ENCODE measurements at regions of chr16 and their contacts with region 1.

Region 1: DNA sequence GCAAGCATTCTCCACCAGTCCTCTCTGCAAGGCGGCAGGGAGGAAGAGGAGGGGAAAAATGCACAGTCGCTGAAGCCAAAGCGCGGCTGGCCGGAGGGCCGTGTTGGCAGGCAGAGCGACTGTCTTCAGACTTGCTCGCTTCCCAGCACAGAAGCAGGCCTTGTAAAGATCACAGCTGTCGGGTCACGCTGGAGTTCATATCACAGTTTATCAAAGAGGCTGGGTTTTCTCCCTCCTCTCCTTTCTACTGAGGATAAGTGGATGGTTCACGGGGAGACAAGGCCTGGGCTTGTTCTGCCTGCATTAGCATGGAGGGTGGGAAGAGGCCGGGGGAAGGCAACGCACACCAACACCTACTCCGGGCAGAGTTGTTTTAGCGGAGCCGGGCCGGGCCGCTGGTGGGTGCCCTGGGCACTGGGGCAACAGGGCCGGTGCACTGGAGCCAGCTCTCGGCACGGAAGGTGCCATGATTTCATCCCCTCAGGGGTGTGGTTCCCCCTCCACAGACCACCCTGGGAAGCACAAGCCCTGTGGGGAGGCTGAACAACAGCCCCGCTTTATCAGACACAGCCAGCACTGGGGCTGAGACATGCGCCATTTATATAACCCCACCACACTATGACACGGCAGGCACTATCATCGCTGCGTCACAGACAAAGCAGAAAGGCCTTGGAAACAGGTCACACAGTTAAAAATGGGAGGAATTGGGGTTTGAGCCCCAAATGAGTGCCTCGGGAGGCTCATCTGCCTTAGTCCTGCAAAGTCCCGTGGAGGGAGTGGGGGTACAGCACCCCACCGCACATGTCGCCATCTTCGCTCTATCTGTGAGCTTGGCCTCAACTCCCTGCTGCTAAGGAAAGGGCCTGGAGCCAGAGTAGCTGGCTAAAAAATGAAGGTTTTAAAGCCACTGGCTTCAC is 40.3 kb upstream of the MTSS2 start:
- DNase-seq: no peak
- ATAC-seq: no peak
- H3K4me3 ChIP-seq: peak overlapping the region; percentile 27 to 73 (median 52); a peak in 5 of 6 replicates
- H3K27ac ChIP-seq: peak overlapping the region; percentile 99
- H3K4me1 ChIP-seq: peaks cover 45% of the 10 kb centered on the region
- H3K27me3 ChIP-seq: no peaks in the 10 kb centered on the region
- CTCF ChIP-seq: no peak
- EP300 ChIP-seq: no peak
- POLR2A ChIP-seq: 0 out of 4 replicates have a peak, but pooled peaks of 1 of the 2 experiments have one; percentile 5
- RAD21 ChIP-seq: no peak

Region 2: GRCh38 chr16:69839798-69840409 is 886.3 kb before region 1 on chr16:
- CTCF ChIA-PET with region 1: no interaction called
- POLR2A ChIA-PET with region 1: no interaction called
- in situ Hi-C with region 1: no loop called
- intact Hi-C with region 1: loop called (anchors 5 kb)
- DNase-seq: peak; percentile 81
- ATAC-seq: peak; percentile 81
- H3K4me3 ChIP-seq: peak overlapping the region in 2 of 3 experiments; percentile 2 to 9; a peak in 2 of 6 replicates
- H3K27ac ChIP-seq: peak overlapping the region; percentile 82
- H3K4me1 ChIP-seq: peaks cover 69% of the 10 kb centered on the region
- H3K27me3 ChIP-seq: no peaks in the 10 kb centered on the region
- CTCF ChIP-seq: no peak
- EP300 ChIP-seq: peak in 1 of 2 experiments; percentile 60; a peak in 2 of 4 replicates
- POLR2A ChIP-seq: no peak
- RAD21 ChIP-seq: no peak

Region 3: GRCh38 chr16:70490261-70490803 is 235.8 kb before region 1 on chr16:
- CTCF ChIA-PET with region 1: no interaction called
- POLR2A ChIA-PET with region 1: no interaction called
- in situ Hi-C with region 1: no loop called
- intact Hi-C with region 1: no loop called
- DNase-seq: no peak
- ATAC-seq: no peak
- H3K4me3 ChIP-seq: no peak overlapping the region
- H3K27ac ChIP-seq: no peak overlapping the region
- H3K4me1 ChIP-seq: no peaks in the 10 kb centered on the region
- H3K27me3 ChIP-seq: no peaks in the 10 kb centered on the region
- CTCF ChIP-seq: no peak
- EP300 ChIP-seq: no peak
- POLR2A ChIP-seq: no peak
- RAD21 ChIP-seq: no peak

Region 4: GRCh38 chr16:70615945-70616344 is 110.2 kb before region 1 on chr16:
- CTCF ChIA-PET with region 1: no interaction called
- POLR2A ChIA-PET with region 1: no interaction called
- in situ Hi-C with region 1: no loop called
- intact Hi-C with region 1: no loop called
- DNase-seq: no peak
- ATAC-seq: no peak
- H3K4me3 ChIP-seq: no peak overlapping the region
- H3K27ac ChIP-seq: no peak overlapping the region
- H3K4me1 ChIP-seq: peaks cover 2% of the 10 kb centered on the region; the same call in 1 of the 2 replicates
- H3K27me3 ChIP-seq: peaks cover 0 to 14% of the 10 kb centered on the region in 2 experiments; a peak in 2 of 5 replicates
- CTCF ChIP-seq: no peak
- EP300 ChIP-seq: no peak
- POLR2A ChIP-seq: no peak
- RAD21 ChIP-seq: no peak

Region 5: DNA sequence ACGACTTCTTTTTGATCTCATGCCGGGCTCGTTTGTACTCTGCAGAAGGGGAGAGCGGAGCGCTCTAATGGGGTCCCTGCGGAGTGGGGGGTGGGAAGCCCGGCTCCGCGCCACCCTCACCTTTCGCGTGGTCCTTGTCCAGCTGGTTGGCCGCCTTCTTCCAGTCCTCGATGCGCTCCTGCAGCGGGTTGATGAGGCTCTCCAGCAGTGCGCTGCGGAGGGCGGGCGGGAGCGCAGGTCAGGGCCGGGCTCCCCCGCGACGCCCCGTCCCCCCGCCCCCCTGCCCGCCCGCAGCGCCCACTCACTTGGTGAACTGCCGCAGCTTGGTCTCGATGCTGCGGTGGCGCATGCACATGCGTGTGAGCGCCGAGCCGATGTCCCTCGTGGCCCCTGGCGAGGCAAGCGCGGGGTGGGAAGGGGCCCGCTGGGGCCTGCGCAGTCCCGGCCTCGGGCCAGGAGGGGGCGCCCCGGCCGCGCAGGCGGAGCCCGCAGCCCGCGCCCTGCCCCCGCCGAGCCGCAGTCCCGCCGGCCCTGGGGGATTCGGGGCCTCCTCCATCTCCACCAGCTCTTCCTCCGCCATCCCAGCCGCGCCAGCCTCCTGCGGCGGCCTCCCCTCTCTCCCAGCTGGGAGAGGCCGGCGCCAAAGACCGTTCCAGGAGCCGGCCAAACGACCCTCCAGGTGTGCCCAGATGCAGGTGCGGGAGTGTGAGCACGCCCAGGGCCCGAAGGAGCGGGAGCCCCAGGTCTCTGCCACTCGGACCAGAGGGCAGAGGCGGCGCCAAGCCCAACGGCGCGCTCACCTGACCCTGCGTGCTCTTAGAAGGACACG is 46.3 kb before region 1 on chr16:
- CTCF ChIA-PET with region 1: no interaction called
- POLR2A ChIA-PET with region 1: interaction called, 536 read pairs
- in situ Hi-C with region 1: loop called (anchors 5 kb)
- intact Hi-C with region 1: loop called (anchors 1 kb)
- DNase-seq: no peak
- ATAC-seq: no peak
- H3K4me3 ChIP-seq: no peak overlapping the region; a peak in 1 of 6 replicates
- H3K27ac ChIP-seq: peak overlapping the region; percentile 91
- H3K4me1 ChIP-seq: peaks cover 39% of the 10 kb centered on the region
- H3K27me3 ChIP-seq: no peaks in the 10 kb centered on the region; a peak in 1 of 5 replicates
- CTCF ChIP-seq: peak; percentile 26; the same call in 1 of the 2 replicates
- EP300 ChIP-seq: no peak
- POLR2A ChIP-seq: no peak
- RAD21 ChIP-seq: peak; percentile 58; the same call in 1 of the 2 replicates

Region 6: GRCh38 chr16:70703041-70703834 is 22.9 kb before region 1 on chr16:
- CTCF ChIA-PET with region 1: no interaction called
- POLR2A ChIA-PET with region 1: interaction called, 134 read pairs
- in situ Hi-C with region 1: no loop called
- intact Hi-C with region 1: no loop called
- DNase-seq: peak; percentile 79
- ATAC-seq: peak; percentile 91
- H3K4me3 ChIP-seq: peak overlapping the region in 1 of 3 experiments; percentile 21; a peak in 1 of 6 replicates
- H3K27ac ChIP-seq: peak overlapping the region; percentile 31
- H3K4me1 ChIP-seq: peaks cover 52% of the 10 kb centered on the region
- H3K27me3 ChIP-seq: no peaks in the 10 kb centered on the region
- CTCF ChIP-seq: peak; percentile 43
- EP300 ChIP-seq: no peak
- POLR2A ChIP-seq: 0 out of 4 replicates have a peak, but pooled peaks of 1 of the 2 experiments have one; percentile 21
- RAD21 ChIP-seq: peak; percentile 84

Region 7: DNA sequence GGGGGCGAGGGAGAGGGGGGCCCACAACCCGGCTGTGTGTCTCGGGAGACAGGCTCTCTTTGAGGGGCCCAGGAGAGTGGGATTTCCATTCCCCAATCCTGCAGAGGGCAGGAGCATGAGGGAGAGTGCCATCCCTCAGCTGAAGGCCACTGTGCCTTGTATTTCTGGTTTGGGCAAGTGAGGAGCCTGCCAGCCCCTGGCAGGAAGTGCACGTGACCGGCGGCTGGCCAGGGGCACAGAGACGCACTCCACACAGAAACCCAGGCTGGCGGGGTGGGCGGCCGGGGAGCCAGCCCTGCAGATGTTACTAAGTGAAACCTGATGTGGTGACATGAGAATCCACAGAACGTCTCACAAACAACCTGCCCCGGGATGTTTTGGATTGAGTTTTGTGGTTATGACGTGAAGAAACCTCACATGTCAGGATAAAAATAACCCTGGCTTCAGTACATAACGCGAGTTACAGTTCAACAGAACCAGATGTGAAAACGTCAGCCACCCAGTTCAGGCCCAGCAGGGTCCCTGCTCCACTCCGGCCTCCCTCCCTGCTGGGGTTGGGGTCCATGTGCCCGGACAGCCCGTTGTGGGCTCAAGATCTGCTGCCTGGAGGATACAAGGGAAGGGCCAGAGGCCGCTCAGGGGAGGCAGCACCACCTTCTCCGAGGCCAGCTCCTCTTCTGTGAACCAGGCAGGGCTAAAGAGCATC is 11.4 kb after region 1 on chr16:
- CTCF ChIA-PET with region 1: no interaction called
- POLR2A ChIA-PET with region 1: interaction called, 357 read pairs
- in situ Hi-C with region 1: no loop called
- intact Hi-C with region 1: loop called (anchors 1 kb)
- DNase-seq: no peak
- ATAC-seq: no peak
- H3K4me3 ChIP-seq: no peak overlapping the region
- H3K27ac ChIP-seq: peak overlapping the region; percentile 11
- H3K4me1 ChIP-seq: peaks cover 59% of the 10 kb centered on the region
- H3K27me3 ChIP-seq: no peaks in the 10 kb centered on the region
- CTCF ChIP-seq: no peak
- EP300 ChIP-seq: no peak
- POLR2A ChIP-seq: no peak
- RAD21 ChIP-seq: no peak

Region 8: DNA sequence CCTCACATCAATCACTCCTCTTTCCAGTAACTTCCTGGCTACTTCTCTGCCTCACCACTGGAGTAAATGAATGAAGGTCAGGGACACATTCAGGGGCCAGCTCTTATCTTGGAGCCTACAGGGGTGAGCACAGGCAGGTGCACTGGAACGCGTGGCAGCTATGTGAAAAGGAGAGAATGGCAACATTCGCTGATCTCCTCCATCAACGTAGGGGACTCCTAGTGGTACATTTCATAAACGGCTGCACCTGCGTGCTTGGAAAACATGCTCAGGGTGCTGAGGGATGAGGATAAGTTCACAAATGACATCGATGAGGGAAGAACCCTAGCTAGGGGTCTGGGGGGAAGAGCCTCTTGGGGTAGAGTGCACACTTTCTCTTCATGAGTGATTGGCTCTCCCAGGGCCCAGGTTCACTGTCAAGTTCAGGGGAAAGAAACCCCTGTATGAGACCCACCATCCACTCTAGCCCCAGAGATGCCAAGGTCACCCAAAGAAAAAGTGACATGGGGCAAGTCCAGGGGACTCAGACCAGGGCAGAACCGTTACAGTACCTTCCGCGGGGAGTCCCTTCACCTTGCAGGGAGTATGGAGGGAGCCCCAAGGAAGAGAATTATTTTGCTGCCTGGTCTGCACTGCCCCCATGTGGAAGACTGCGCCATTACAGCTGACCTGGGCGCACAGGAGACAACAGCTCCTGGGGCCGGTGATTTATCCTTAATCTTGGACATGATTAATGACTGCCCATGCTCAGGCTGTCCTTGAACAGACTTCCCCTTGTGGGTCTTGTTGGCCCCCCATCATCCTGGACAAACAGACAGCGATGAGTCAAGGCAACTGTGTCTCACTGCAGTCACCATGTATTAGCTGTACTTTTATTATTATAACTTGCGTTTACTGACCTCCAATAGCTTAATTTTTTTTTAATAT is 44.7 kb after region 1 on chr16:
- CTCF ChIA-PET with region 1: no interaction called
- POLR2A ChIA-PET with region 1: interaction called, 32 read pairs
- in situ Hi-C with region 1: no loop called
- intact Hi-C with region 1: no loop called
- DNase-seq: peak; percentile 55
- ATAC-seq: peak; percentile 87
- H3K4me3 ChIP-seq: no peak overlapping the region
- H3K27ac ChIP-seq: no peak overlapping the region
- H3K4me1 ChIP-seq: peaks cover 12% of the 10 kb centered on the region
- H3K27me3 ChIP-seq: no peaks in the 10 kb centered on the region
- CTCF ChIP-seq: peak; percentile 93
- EP300 ChIP-seq: no peak
- POLR2A ChIP-seq: no peak
- RAD21 ChIP-seq: peak; percentile 95

Measured in HepG2 (cell line).